Transverse colon (tissue), 4 donors: ENCODE measurements at regions of chr6 and their contacts with region 1.

Region 1: GRCh38 chr6:515267-515666 is 123.7 kb downstream of the IRF4 start:
- DNase-seq: no peak
- H3K4me3 ChIP-seq: no peak overlapping the region
- H3K27ac ChIP-seq: no peak overlapping the region
- H3K4me1 ChIP-seq: no peaks in the 10 kb centered on the region
- H3K27me3 ChIP-seq: no peaks in the 10 kb centered on the region
- CTCF ChIP-seq: no peak
- EP300 ChIP-seq: no peak
- POLR2A ChIP-seq: no peak

Region 2: DNA sequence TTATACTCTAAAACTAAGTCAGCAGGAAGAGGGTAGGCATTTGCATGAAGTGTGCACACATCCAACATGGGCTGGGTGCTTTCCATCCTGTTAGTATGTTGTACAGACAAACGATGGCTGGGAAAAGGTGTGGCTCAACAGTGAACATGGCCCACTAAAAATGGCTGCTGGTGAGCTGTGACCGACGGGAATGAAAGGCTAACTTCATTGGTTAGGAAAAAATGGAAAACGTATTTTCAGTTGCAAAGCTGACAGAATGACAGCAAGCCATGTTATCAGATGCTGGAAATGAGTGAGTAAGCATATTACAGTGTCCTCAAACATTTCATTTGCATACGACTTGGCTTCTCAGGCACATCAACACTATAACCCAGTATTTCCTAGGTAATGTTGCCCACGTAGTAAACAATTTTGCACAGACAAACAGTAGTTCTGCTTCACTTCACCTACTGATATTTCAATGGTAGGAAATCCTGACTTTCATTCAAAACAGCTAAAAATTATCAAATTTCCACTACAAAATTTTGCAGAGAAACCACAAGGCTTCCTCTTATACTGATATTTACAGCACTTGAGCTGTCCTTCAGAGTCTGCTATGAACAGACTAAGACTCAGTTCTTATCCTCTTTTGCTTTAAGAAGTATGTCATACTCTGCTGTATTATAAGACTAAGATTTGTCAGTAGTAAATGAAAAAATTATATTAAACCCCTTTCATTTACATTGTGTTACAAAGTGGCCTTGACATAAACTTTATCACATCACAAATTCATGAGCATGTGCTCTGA is 24.8 kb before region 1 on chr6:
- in situ Hi-C with region 1: no loop called
- intact Hi-C with region 1: loop called (anchors 1 kb)
- DNase-seq: no peak
- H3K4me3 ChIP-seq: no peak overlapping the region
- H3K27ac ChIP-seq: no peak overlapping the region
- H3K4me1 ChIP-seq: peaks cover 0 to 5% (median 0%) of the 10 kb centered on the region in 4 donors
- H3K27me3 ChIP-seq: no peaks in the 10 kb centered on the region
- CTCF ChIP-seq: no peak
- EP300 ChIP-seq: no peak
- POLR2A ChIP-seq: no peak